ENCODE measurements at regions of chr6 and their contacts with region 1.

Region 1: GRCh38 chr6:139439349-139439748 is 64.9 kb upstream of the CITED2 start:
- DNase-seq: no peak
- ATAC-seq: peak; percentile 28; the same call in 2 of the 3 replicates
- H3K4me3 ChIP-seq: no peak overlapping the region
- H3K27ac ChIP-seq: no peak overlapping the region
- H3K4me1 ChIP-seq: peaks cover 15 to 36% of the 10 kb centered on the region in 2 experiments
- H3K27me3 ChIP-seq: no peaks in the 10 kb centered on the region
- CTCF ChIP-seq: no peak
- EP300 ChIP-seq: peak; percentile 12; the same call in 1 of the 2 replicates
- POLR2A ChIP-seq: no peak
- RAD21 ChIP-seq: no peak

Region 2: GRCh38 chr6:139474145-139475108 is 35.1 kb after region 1 on chr6:
- CTCF ChIA-PET with region 1: no interaction called
- POLR2A ChIA-PET with region 1: interaction called, 4 read pairs
- in situ Hi-C with region 1: no loop called
- intact Hi-C with region 1: loop called (anchors 2 kb)
- DNase-seq: peak; percentile 31 to 63 (median 41)
- ATAC-seq: peak; percentile 48
- H3K4me3 ChIP-seq: peak overlapping the region; percentile 0; the same call in 1 of the 2 replicates
- H3K27ac ChIP-seq: peak overlapping the region; percentile 51
- H3K4me1 ChIP-seq: peaks cover 14 to 35% of the 10 kb centered on the region in 2 experiments
- H3K27me3 ChIP-seq: no peaks in the 10 kb centered on the region
- CTCF ChIP-seq: no peak
- EP300 ChIP-seq: peak; percentile 15
- POLR2A ChIP-seq: no peak
- RAD21 ChIP-seq: 0 out of 4 replicates have a peak, but pooled peaks have one; percentile 2 to 13

Measured in K562 (cell line).